Activated CD4-positive, alpha-beta memory T cell treated with anti-CD3 and anti-CD28 coated beads, Interleukin-2, amount 10 ng/mL, durations not matched to agents 7 days and 5 days (primary cell): ENCODE measurements at regions of chr20 and their contacts with region 1.

Region 1: DNA sequence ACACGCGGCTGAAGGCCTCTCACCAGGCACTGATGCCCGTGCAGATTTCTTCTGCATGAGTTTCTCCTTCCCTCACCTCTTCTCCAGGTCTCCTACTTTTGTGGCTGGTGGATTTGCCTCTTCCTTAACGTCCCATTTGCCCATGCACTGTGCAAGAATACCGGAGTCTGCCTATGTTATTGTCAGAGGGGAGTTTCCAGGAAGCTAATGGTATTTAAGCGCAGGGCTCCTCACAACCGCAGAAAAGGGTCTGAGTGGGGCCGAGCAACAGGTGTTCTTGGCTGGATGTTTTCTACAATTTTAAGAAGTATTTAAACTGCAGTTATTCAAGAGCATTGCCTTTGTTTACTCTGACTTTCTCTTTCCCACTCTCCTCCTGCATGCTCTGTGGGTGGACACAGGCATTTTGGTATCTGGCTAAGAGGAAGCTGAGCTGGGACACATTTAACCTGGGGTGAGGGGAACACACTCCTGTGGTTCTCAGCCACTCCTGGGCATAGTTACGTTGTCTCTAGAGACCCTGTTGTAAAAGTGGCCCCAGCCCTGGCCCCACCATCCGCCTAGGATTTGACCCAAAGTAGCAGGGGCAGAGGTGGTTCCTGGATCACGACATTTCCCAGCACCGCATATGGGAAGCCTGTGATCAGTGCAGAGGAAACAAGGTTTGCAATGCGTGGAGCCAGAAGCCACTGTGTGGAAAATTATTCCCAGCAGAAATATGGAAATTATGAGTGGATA is 34.4 kb downstream of the GGTLC1 start:
- DNase-seq: no peak
- H3K4me3 Mint-ChIP-seq: no peak overlapping the region
- H3K27ac Mint-ChIP-seq: no peak overlapping the region
- H3K4me1 Mint-ChIP-seq: no peaks in the 10 kb centered on the region
- H3K27me3 Mint-ChIP-seq: peaks cover 6% of the 10 kb centered on the region

Region 2: DNA sequence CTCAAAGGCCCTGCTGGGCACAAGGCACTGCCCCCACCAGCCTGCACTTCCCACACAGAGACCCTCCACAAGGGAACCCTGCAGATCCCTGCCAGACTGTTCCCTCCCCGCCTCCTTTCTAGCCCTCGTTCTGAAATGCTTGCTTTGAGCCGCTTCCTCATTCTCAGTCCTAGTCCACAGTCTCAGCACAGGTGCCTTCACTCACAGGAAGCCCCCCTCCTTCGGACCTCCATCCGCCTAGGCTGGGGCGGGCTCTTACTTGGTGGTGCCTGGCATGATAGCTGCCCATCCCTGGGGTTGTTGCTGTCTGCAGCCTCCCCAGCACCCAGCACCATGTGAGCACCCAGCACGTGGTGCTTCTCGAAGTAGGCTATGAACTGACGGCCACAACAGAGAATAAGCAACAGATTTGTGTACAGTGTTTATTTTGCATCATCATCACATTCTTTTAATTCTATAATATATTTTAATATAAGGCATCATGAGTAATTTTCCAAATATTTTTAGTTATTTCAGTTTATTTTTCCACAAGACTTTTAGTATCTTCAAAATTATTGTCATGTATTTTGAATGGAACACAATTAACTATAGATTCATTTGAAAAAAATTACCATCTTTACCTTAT is 86.9 kb before region 1 on chr20:
- CTCF ChIA-PET with region 1: no interaction called
- POLR2A ChIA-PET with region 1: no interaction called
- DNase-seq: no peak
- H3K4me3 Mint-ChIP-seq: no peak overlapping the region
- H3K27ac Mint-ChIP-seq: no peak overlapping the region
- H3K4me1 Mint-ChIP-seq: no peaks in the 10 kb centered on the region
- H3K27me3 Mint-ChIP-seq: peaks cover 22% of the 10 kb centered on the region

Region 3: DNA sequence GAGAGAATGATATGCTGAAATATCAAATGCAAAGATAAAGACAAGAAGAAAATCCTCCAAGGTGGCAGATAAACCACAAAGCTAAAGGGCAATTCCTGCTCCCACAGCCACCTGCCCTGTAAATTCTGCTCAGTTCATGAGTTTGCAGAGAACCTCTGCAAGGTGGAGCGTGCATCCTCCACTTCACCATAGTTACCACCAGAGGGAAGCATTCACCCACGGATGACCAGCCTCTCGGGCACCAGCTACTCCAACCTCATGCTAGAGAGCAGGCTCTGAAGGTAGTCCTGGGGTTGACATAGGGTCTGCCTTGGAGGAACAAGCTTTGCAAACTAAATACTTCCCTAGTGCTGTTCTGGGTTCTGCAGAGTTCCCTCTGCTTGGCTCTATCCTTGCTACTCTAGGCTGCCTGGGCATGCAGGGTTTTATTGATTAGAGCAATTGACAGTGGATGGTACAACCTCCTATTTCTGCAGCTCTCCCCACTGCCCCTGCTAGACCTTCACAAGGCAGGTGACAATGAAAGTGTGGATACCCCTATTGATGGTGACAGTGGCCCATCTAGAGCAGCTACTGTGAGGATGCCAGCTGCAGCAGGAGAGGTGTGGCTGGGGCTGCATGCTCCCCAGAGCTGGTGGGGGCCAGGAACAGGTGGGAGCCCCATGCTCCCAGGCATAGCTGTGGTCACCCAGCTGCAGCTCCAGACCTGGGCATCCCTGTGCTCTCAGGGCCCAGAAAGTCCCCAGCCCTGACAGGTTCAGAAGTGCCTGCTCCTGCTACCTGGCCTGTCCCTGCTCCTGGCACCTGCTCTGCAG is 16.7 kb before region 1 on chr20:
- CTCF ChIA-PET with region 1: interaction called, 10 read pairs
- POLR2A ChIA-PET with region 1: no interaction called
- DNase-seq: peak; percentile 63
- H3K4me3 Mint-ChIP-seq: no peak overlapping the region
- H3K27ac Mint-ChIP-seq: no peak overlapping the region
- H3K4me1 Mint-ChIP-seq: no peaks in the 10 kb centered on the region
- H3K27me3 Mint-ChIP-seq: peaks cover 6% of the 10 kb centered on the region

Region 4: GRCh38 chr20:24060851-24061590 is 106.8 kb after region 1 on chr20:
- CTCF ChIA-PET with region 1: no interaction called
- POLR2A ChIA-PET with region 1: no interaction called
- DNase-seq: no peak
- H3K4me3 Mint-ChIP-seq: no peak overlapping the region
- H3K27ac Mint-ChIP-seq: no peak overlapping the region
- H3K4me1 Mint-ChIP-seq: peaks cover 5% of the 10 kb centered on the region
- H3K27me3 Mint-ChIP-seq: peaks cover 7% of the 10 kb centered on the region